ENCODE measurements at regions of chr2 and their contacts with region 1.

Region 1: GRCh38 chr2:189661148-189661956 is at the start of gene ASNSD1:
- DNase-seq: peak; percentile 98 to 100 (median 100)
- H3K4me3 ChIP-seq: peak within 1 kb of the TSS; percentile 61 to 85
- H3K4me3 Mint-ChIP-seq: no peak within 1 kb of the TSS
- H3K27ac ChIP-seq: peak within 1 kb of the TSS; percentile 99
- H3K27ac Mint-ChIP-seq: no peak within 1 kb of the TSS
- H3K4me1 ChIP-seq: peaks cover 67% of the 10 kb centered on the region
- H3K4me1 Mint-ChIP-seq: peaks cover 40 to 57% (median 43%) of the 10 kb centered on the region in 4 donors
- H3K27me3 ChIP-seq: no peaks in the 10 kb centered on the region
- H3K27me3 Mint-ChIP-seq: no peaks in the 10 kb centered on the region
- total RNA-seq, gene ASNSD1: 46.9 to 47.0 TPM

Region 2: GRCh38 chr2:189440947-189441708 is 220.2 kb before region 1 on chr2 and contains the start of gene WDR75:
- CTCF ChIA-PET with region 1: interaction called, 4 read pairs
- POLR2A ChIA-PET with region 1: interaction called, 5 read pairs
- intact Hi-C with region 1: loop called (anchors 1 kb)
- DNase-seq: peak; percentile 93 to 96 (median 95)
- H3K4me3 ChIP-seq: peak within 1 kb of the TSS; percentile 87 to 99
- H3K4me3 Mint-ChIP-seq: peak within 1 kb of the TSS in 6 of 8 donors; percentile 98 to 100 (median 100)
- H3K27ac ChIP-seq: peak within 1 kb of the TSS; percentile 89
- H3K27ac Mint-ChIP-seq: peak within 1 kb of the TSS; percentile 97 to 100 (median 100)
- H3K4me1 ChIP-seq: peaks cover 49% of the 10 kb centered on the region
- H3K4me1 Mint-ChIP-seq: peaks cover 0 to 18% (median 11%) of the 10 kb centered on the region in 4 donors
- H3K27me3 ChIP-seq: no peaks in the 10 kb centered on the region
- H3K27me3 Mint-ChIP-seq: no peaks in the 10 kb centered on the region
- total RNA-seq, gene WDR75: 60.8 to 61.4 TPM

Region 3: DNA sequence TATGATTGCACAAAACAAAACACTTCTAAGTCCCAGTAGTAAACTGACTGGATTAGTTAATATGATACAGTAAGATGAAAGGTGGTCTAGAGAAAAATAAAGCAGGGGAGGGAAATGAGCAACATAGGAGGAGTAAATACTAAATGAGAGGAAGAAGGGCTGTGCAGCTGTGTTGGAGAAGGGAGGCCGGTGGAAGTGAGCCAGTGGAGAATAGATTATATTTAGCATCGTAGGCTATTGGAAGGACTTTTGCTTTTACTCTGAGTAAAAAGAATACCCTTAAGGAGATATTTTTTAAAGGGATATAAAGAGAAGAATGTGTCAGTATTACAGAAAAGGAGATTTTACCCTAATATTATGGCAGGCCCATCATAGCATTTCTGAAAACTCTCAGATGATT is 207.3 kb before region 1 on chr2:
- CTCF ChIA-PET with region 1: no interaction called
- POLR2A ChIA-PET with region 1: no interaction called
- intact Hi-C with region 1: no loop called
- DNase-seq: no peak
- H3K4me3 ChIP-seq: no peak overlapping the region
- H3K4me3 Mint-ChIP-seq: no peak overlapping the region
- H3K27ac ChIP-seq: no peak overlapping the region
- H3K27ac Mint-ChIP-seq: peak overlapping the region in 2 of 7 donors; percentile 52 to 72
- H3K4me1 ChIP-seq: no peaks in the 10 kb centered on the region
- H3K4me1 Mint-ChIP-seq: peaks cover 0 to 4% (median 1%) of the 10 kb centered on the region in 4 donors
- H3K27me3 ChIP-seq: no peaks in the 10 kb centered on the region
- H3K27me3 Mint-ChIP-seq: no peaks in the 10 kb centered on the region

Region 4: DNA sequence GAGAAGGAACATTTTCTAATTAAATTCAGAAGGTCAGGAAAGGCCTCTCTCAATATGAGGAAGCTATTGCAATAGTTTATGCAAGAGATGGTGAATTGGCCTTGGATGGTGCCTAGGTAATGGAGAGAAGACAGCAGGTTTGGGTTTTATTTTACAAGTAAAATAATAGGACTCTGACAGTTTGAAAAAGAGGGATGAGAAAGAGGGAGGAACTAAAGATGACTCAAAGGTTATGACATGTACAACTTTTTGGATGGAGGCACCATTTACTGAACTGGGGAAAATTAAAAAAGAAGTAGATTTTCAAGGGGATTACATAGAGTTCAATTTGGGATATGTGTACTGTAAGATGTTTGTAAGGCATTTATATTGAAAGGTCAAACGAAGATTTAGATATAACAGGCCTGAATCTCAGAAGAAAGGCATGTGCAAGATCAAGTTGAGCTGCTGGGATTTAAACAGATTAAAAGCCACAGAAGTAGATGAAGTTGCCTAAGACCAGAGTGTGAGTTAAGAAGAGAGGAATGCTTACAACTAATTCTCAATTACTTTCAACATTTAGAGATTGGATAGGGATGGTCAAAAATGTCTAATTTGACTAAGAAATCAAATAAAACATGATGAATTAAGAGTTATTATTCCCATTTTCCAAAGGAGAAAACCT is 12.4 kb before region 1 on chr2:
- CTCF ChIA-PET with region 1: interaction called, 15 read pairs
- POLR2A ChIA-PET with region 1: interaction called, 5 read pairs
- intact Hi-C with region 1: no loop called
- DNase-seq: no peak
- H3K4me3 ChIP-seq: no peak overlapping the region
- H3K4me3 Mint-ChIP-seq: no peak overlapping the region
- H3K27ac ChIP-seq: no peak overlapping the region
- H3K27ac Mint-ChIP-seq: no peak overlapping the region
- H3K4me1 ChIP-seq: no peaks in the 10 kb centered on the region
- H3K4me1 Mint-ChIP-seq: peaks cover 0 to 4% (median 0%) of the 10 kb centered on the region in 4 donors
- H3K27me3 ChIP-seq: no peaks in the 10 kb centered on the region
- H3K27me3 Mint-ChIP-seq: no peaks in the 10 kb centered on the region

Region 5: GRCh38 chr2:189751080-189751658 is 89.8 kb after region 1 on chr2:
- CTCF ChIA-PET with region 1: interaction called, 8 read pairs
- POLR2A ChIA-PET with region 1: no interaction called
- intact Hi-C with region 1: loop called (anchors 1 kb)
- DNase-seq: peak; percentile 36 to 49 (median 43)
- H3K4me3 ChIP-seq: no peak overlapping the region
- H3K4me3 Mint-ChIP-seq: no peak overlapping the region
- H3K27ac ChIP-seq: no peak overlapping the region
- H3K27ac Mint-ChIP-seq: peak overlapping the region in 3 of 7 donors; percentile 19 to 89 (median 59)
- H3K4me1 ChIP-seq: no peaks in the 10 kb centered on the region
- H3K4me1 Mint-ChIP-seq: peaks cover 0 to 1% (median 0%) of the 10 kb centered on the region in 4 donors
- H3K27me3 ChIP-seq: no peaks in the 10 kb centered on the region
- H3K27me3 Mint-ChIP-seq: no peaks in the 10 kb centered on the region

Region 6: GRCh38 chr2:190069936-190070696 is 408.8 kb after region 1 on chr2:
- CTCF ChIA-PET with region 1: no interaction called
- POLR2A ChIA-PET with region 1: no interaction called
- intact Hi-C with region 1: loop called (anchors 1 kb)
- DNase-seq: peak in 4 of 5 donors; percentile 28 to 35 (median 32)
- H3K4me3 ChIP-seq: no peak overlapping the region
- H3K4me3 Mint-ChIP-seq: no peak overlapping the region
- H3K27ac ChIP-seq: no peak overlapping the region
- H3K27ac Mint-ChIP-seq: no peak overlapping the region
- H3K4me1 ChIP-seq: no peaks in the 10 kb centered on the region
- H3K4me1 Mint-ChIP-seq: no peaks in the 10 kb centered on the region
- H3K27me3 ChIP-seq: no peaks in the 10 kb centered on the region
- H3K27me3 Mint-ChIP-seq: peaks cover 0 to 6% of the 10 kb centered on the region in 2 donors

Region 7: GRCh38 chr2:190376591-190377245 is 715.4 kb after region 1 on chr2:
- CTCF ChIA-PET with region 1: interaction called, 3 read pairs
- POLR2A ChIA-PET with region 1: no interaction called
- intact Hi-C with region 1: loop called (anchors 1 kb)
- DNase-seq: no peak
- H3K4me3 ChIP-seq: no peak overlapping the region
- H3K4me3 Mint-ChIP-seq: no peak overlapping the region
- H3K27ac ChIP-seq: no peak overlapping the region
- H3K27ac Mint-ChIP-seq: no peak overlapping the region
- H3K4me1 ChIP-seq: no peaks in the 10 kb centered on the region
- H3K4me1 Mint-ChIP-seq: peaks cover 0 to 2% (median 0%) of the 10 kb centered on the region in 4 donors
- H3K27me3 ChIP-seq: no peaks in the 10 kb centered on the region
- H3K27me3 Mint-ChIP-seq: no peaks in the 10 kb centered on the region

Measured in CD4-positive, alpha-beta memory T cell (primary cell).